Head of caudate nucleus (tissue), 42 donors: ENCODE measurements at regions of chr10 and their contacts with region 1.

Region 1: GRCh38 chr10:132452631-132453469 is 55.9 kb downstream of the PWWP2B start:
- DNase-seq: peak in 40 of 42 donors; percentile 47 to 87 (median 72)

Region 2: DNA sequence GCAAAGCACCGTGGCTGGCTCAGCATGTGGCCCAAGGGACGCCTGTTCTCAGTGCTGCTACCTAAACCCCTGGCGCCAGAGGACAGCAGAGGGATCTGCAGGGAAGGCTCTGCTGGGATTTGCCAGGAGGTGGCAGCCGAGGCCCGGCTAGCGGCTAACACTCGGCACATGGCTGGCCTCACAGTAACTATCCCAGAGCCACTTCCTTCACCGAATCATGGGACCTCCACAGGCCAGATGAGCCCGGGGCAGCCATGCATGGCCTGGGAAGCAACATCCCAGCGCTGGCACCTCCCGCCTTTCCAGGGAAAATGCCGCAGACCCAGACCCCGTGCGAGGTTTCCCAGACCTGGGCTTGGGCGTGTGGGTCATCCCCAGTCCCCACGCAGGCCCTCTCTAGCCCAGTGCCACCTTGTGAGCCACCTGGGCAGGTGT is 229.7 kb before region 1 on chr10:
- intact Hi-C with region 1: loop called (anchors 5 kb)
- DNase-seq: peak; percentile 68 to 92 (median 85)

Region 3: GRCh38 chr10:132389433-132390169 is 63.2 kb before region 1 on chr10:
- intact Hi-C with region 1: loop called (anchors 5 kb)
- DNase-seq: peak in 8 of 42 donors; percentile 10 to 42 (median 26)

Region 4: GRCh38 chr10:133009222-133009954 is 556.5 kb after region 1 on chr10:
- intact Hi-C with region 1: no loop called
- DNase-seq: peak in 12 of 42 donors; percentile 10 to 60 (median 28)